ENCODE measurements at regions of chrX and their contacts with region 1.

Region 1: DNA sequence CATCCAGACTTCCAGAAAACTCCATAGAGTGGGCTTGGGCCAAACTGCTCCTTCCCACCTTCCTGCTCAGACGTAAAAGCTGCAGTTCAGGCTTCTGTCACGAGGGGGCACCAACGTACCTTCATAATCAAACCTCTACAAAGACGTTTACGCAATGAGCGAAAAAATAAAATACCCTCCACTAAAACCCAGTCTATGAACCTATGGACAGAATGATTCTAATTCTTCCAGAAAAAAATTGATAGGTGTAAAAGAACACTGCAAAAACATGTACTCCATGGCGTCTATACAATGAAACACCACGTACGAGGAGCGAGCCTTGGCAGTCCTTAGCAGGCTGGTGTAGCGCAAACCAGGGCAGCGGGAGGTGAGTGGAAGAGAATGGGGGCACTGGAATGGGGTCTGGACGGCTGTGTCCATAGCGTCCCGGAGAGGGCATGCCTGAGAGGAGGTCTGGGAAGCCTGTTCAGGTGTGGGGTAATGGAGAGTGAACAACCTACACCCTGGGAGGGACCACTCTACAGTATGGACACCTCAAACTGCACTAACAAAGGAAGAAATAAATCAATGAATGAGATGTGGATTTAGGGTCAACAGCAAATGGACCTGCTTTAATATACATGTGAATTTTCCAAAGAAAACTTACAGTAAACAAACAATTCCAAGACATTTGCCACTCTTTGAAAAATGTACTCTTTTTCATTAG is 14.4 kb upstream of the RAB40A start:
- DNase-seq: peak; percentile 55
- H3K4me3 ChIP-seq: peak overlapping the region; percentile 4 to 22 (median 16)
- H3K27ac ChIP-seq: no peak overlapping the region
- H3K4me1 ChIP-seq: peaks cover 24% of the 10 kb centered on the region
- H3K27me3 ChIP-seq: no peaks in the 10 kb centered on the region
- CTCF ChIP-seq: peak; percentile 80 to 90

Region 2: DNA sequence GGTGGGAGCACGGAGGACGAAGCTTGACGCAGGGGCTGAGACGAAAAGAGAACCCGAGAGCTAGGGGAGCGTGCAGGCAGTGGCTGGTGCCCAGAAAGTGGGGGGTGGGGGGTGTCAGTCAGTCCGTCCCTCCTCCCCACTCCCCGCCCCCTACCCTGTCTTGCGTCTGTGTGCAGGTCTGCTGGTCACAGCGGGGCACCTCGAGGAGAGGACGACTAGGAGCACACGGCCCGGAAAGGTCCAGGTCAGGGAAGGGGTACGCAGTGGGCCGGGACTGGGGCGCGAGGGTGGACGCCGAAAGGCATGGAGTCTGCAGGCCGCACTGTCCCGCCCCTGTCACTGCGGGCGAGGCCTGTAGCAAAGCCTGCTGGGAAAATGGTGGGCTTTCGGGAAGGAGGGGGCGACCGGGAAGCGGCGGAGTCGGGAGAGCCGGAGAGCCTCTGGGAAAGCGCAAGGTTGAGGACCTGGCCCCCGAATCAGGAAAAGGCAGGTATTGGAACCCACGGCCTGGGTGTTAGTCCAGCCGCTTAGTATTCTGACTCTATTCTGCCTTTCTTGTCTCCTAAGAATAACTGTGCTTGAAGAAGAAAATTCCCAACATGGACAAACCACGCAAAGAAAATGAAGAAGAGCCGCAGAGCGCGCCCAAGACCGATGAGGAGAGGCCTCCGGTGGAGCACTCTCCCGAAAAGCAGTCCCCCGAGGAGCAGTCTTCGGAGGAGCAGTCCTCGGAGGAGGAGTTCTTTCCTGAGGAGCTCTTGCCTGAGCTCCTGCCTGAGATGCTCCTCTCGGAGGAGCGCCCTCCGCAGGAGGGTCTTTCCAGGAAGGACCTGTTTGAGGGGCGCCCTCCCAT is 95.9 kb after region 1 on chrX:
- CTCF ChIA-PET with region 1: no interaction called
- dilution Hi-C with region 1: no loop called
- in situ Hi-C with region 1: no loop called
- intact Hi-C with region 1: loop called (anchors 1 kb)
- DNase-seq: peak; percentile 46
- H3K4me3 ChIP-seq: peak overlapping the region; percentile 43 to 71 (median 46)
- H3K27ac ChIP-seq: peak overlapping the region; percentile 52
- H3K4me1 ChIP-seq: peaks cover 16% of the 10 kb centered on the region
- H3K27me3 ChIP-seq: no peaks in the 10 kb centered on the region
- CTCF ChIP-seq: peak; percentile 14 to 56

Region 3: GRCh38 chrX:103711533-103712369 is 178.1 kb after region 1 on chrX:
- CTCF ChIA-PET with region 1: no interaction called
- dilution Hi-C with region 1: no loop called
- in situ Hi-C with region 1: no loop called
- intact Hi-C with region 1: loop called (anchors 1 kb)
- DNase-seq: peak; percentile 39
- H3K4me3 ChIP-seq: no peak overlapping the region
- H3K27ac ChIP-seq: no peak overlapping the region
- H3K4me1 ChIP-seq: peaks cover 3% of the 10 kb centered on the region
- H3K27me3 ChIP-seq: peaks cover 2% of the 10 kb centered on the region
- CTCF ChIP-seq: peak; percentile 72 to 73

Region 4: DNA sequence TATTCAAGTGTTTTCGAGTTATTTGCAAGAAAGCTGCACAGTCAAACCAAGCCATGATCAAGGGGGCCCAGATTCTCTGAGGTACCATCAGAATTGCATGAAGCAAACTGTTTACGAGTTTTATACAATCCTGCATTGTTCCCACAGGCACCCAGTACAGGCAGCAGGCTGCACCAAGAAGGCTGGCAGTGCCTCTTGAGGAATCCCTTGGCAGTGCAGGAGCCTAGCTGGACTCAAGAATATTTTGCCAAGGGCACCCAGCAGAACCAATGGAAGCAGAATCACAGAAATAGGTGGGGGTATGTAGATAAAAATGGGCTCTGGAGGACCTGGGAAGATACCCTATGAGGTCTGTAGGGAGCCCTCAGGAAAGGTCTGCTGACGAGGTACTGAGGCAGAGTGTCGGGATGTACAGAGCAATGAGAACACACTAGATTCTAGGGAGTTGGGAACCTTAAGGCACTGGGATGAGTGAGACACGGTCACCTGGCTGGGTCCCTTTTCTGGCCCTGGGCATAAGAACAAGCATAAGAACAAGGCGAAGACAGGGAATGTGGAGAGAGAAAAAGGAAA is 240.5 kb after region 1 on chrX:
- CTCF ChIA-PET with region 1: no interaction called
- dilution Hi-C with region 1: no loop called
- in situ Hi-C with region 1: no loop called
- intact Hi-C with region 1: loop called (anchors 1 kb)
- DNase-seq: peak; percentile 32
- H3K4me3 ChIP-seq: no peak overlapping the region
- H3K27ac ChIP-seq: no peak overlapping the region
- H3K4me1 ChIP-seq: no peaks in the 10 kb centered on the region
- H3K27me3 ChIP-seq: no peaks in the 10 kb centered on the region
- CTCF ChIP-seq: peak; percentile 54 to 73

Region 5: GRCh38 chrX:103817502-103817901 is 283.8 kb after region 1 on chrX:
- CTCF ChIA-PET with region 1: no interaction called
- dilution Hi-C with region 1: no loop called
- in situ Hi-C with region 1: loop called (anchors 10 to 25 kb)
- intact Hi-C with region 1: loop called (anchors 1 kb)
- DNase-seq: no peak
- H3K4me3 ChIP-seq: no peak overlapping the region
- H3K27ac ChIP-seq: no peak overlapping the region
- H3K4me1 ChIP-seq: no peaks in the 10 kb centered on the region
- H3K27me3 ChIP-seq: no peaks in the 10 kb centered on the region
- CTCF ChIP-seq: peak; percentile 55 to 64

Region 6: DNA sequence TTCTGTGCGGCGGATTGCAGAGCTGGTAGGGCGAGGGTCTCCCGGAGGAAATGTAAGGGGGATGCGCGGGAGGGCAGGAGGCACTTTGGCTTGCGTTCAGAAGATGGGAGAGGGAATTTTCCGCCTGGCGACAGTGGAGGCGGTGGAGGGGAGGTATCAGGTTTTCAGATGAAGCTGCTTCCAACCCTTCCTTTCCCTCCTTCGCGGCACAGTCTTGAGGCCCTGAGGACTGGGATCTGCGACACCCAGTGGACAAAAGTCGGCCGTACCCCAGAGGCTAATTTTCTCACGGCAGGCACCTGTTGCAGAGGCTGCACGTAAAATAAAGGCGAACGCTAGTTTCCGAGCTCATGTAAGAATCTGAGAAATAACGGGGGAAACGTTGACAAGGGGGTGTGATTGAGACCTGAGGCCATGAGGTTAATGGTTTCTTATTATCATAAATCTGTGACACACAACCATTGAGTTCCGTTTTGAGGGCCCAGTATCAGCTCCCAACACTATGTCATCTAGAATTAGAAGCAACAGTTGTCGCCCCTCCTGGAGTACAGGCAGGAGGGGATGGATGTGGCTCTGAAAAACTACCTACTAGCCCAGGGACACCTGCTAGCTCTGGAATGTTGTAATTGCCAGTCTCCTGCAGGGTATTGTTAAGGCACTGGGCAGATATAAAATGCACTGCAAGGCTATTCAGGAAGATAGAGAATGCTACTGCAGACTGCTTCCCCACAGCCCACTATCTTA is 579.7 kb after region 1 on chrX:
- CTCF ChIA-PET with region 1: no interaction called
- dilution Hi-C with region 1: no loop called
- in situ Hi-C with region 1: loop called in 1 of 2 experiments (anchors 25 kb)
- intact Hi-C with region 1: no loop called
- DNase-seq: peak; percentile 53
- H3K4me3 ChIP-seq: peak overlapping the region; percentile 30 to 67 (median 63)
- H3K27ac ChIP-seq: no peak overlapping the region
- H3K4me1 ChIP-seq: no peaks in the 10 kb centered on the region
- H3K27me3 ChIP-seq: no peaks in the 10 kb centered on the region
- CTCF ChIP-seq: peak; percentile 42 to 61

Region 7: GRCh38 chrX:104136241-104137019 is 602.8 kb after region 1 on chrX:
- CTCF ChIA-PET with region 1: no interaction called
- dilution Hi-C with region 1: no loop called
- in situ Hi-C with region 1: loop called in 1 of 2 experiments (anchors 25 kb)
- intact Hi-C with region 1: no loop called
- DNase-seq: peak; percentile 65
- H3K4me3 ChIP-seq: peak overlapping the region in 2 of 3 experiments; percentile 37 to 40
- H3K27ac ChIP-seq: no peak overlapping the region
- H3K4me1 ChIP-seq: no peaks in the 10 kb centered on the region
- H3K27me3 ChIP-seq: no peaks in the 10 kb centered on the region
- CTCF ChIP-seq: peak; percentile 79

Measured in mammary epithelial cell (primary cell).